Activated CD8-positive, alpha-beta T cell treated with anti-CD3 and anti-CD28 coated beads, Interleukin-2, amount 10 ng/mL, durations not matched to agents 7 days and 5 days (primary cell): ENCODE measurements at regions of chr3 and their contacts with region 1.

Region 1: GRCh38 chr3:153640689-153641301 is 478.8 kb downstream of the RAP2B start:
- DNase-seq: no peak
- ATAC-seq: no peak
- H3K4me3 Mint-ChIP-seq: no peak overlapping the region
- H3K27ac Mint-ChIP-seq: no peak overlapping the region
- H3K4me1 Mint-ChIP-seq: peaks cover 40% of the 10 kb centered on the region
- H3K27me3 Mint-ChIP-seq: no peaks in the 10 kb centered on the region

Region 2: GRCh38 chr3:153628591-153628990 is 12.2 kb before region 1 on chr3:
- CTCF ChIA-PET with region 1: interaction called, 12 read pairs
- POLR2A ChIA-PET with region 1: interaction called, 3 read pairs
- DNase-seq: no peak
- ATAC-seq: no peak
- H3K4me3 Mint-ChIP-seq: peak overlapping the region; percentile 26
- H3K27ac Mint-ChIP-seq: peak overlapping the region; percentile 45
- H3K4me1 Mint-ChIP-seq: peaks cover 59% of the 10 kb centered on the region
- H3K27me3 Mint-ChIP-seq: no peaks in the 10 kb centered on the region